H1 (cell line): ENCODE measurements at regions of chr7 and their contacts with region 1.

Region 1: DNA sequence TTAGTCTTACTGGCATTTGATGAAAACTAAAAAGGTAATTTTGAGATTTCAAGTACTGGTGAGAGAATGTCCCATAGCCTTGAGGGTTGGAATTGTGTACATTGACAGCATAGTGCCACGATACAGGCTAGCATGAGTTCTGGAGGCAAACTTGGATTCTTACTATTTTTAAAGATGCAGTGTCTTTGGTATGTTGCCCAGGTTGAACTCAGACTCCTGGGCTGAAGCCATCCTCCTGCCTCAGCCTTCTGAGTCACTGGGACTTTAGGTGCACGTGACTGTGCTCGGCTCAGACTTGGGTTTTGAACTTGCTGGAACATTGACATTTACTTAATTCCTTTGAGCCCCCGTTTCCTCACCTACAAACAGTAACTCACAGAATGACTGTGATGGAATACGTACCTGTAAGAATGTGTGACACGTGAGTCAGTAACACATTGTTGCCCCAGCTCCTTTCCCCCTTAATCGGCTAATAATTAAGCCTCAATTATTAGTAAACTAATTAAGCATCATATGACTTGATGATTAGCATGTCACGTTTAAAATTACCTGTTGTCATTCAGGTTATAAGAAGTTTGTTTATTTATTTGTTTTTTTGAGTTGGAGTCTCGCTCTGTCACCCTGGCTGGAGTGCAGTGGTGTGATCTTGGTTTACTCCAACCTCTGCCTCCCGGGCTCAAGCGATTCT is 10.6 kb downstream of the DNAJB6 start:
- DNase-seq: no peak
- H3K4me3 ChIP-seq: no peak overlapping the region
- H3K27ac ChIP-seq: no peak overlapping the region
- H3K4me1 ChIP-seq: peaks cover 2 to 27% (median 7%) of the 10 kb centered on the region in 4 experiments; a peak in 5 of 7 replicates
- H3K27me3 ChIP-seq: no peaks in the 10 kb centered on the region
- CTCF ChIP-seq: no peak
- EP300 ChIP-seq: no peak
- POLR2A ChIP-seq: no peak
- RAD21 ChIP-seq: no peak

Region 2: GRCh38 chr7:157357129-157358040 is 10.0 kb after region 1 on chr7:
- CTCF ChIA-PET with region 1: interaction called, 7 read pairs
- POLR2A ChIA-PET with region 1: interaction called, 28 read pairs
- DNase-seq: no peak
- H3K4me3 ChIP-seq: no peak overlapping the region
- H3K27ac ChIP-seq: no peak overlapping the region; the same call in 1 of the 2 replicates
- H3K4me1 ChIP-seq: peaks cover 2 to 17% (median 16%) of the 10 kb centered on the region in 4 experiments
- H3K27me3 ChIP-seq: no peaks in the 10 kb centered on the region
- CTCF ChIP-seq: no peak
- EP300 ChIP-seq: no peak
- POLR2A ChIP-seq: no peak
- RAD21 ChIP-seq: no peak